Endothelial cell of umbilical vein (primary cell): ENCODE measurements at regions of chr6 and their contacts with region 1.

Region 1: GRCh38 chr6:138517635-138518034 is 18.3 kb upstream of the NHSL1 start:
- DNase-seq: peak; percentile 35
- H3K4me3 ChIP-seq: no peak overlapping the region
- H3K27ac ChIP-seq: no peak overlapping the region
- H3K4me1 ChIP-seq: peaks cover 12% of the 10 kb centered on the region
- H3K27me3 ChIP-seq: no peaks in the 10 kb centered on the region
- CTCF ChIP-seq: peak; percentile 67 to 77
- POLR2A ChIP-seq: no peak

Region 2: DNA sequence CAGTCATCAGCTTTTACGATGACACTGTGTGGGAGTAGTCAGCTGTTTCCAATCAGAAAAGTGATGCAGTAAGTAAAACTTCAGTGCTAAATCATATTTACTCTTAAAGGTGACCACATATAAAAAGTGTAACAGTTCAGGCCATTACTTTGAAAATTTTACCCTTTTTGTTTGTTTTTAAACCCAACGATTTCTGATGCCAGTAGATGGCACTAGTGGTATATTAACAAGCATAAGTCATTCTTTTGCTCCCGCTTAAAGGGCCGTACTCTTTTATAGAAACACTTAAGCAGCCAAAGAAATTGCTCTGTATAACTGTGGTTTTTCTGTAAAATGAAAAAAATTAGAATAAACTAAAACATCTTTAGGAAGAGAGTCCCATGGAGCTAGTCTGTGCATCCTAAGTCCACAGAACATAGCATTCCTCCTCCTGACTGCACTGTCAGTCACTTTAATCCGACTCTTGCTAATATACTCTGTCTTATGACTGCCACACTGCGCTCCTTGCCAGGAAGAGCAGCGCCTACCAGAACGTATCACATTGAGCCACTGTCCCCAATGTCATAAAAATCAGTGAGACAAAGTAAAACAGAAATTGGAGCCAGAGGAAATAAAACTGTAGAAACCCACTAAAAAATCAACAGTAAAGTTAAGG is 88.6 kb before region 1 on chr6:
- CTCF ChIA-PET with region 1: interaction called, 11 read pairs
- POLR2A ChIA-PET with region 1: no interaction called
- dilution Hi-C with region 1: no loop called
- intact Hi-C with region 1: loop called (anchors 1 kb)
- DNase-seq: peak; percentile 62
- H3K4me3 ChIP-seq: no peak overlapping the region
- H3K27ac ChIP-seq: no peak overlapping the region
- H3K4me1 ChIP-seq: no peaks in the 10 kb centered on the region
- H3K27me3 ChIP-seq: no peaks in the 10 kb centered on the region
- CTCF ChIP-seq: peak; percentile 36 to 41
- POLR2A ChIP-seq: no peak

Region 3: GRCh38 chr6:138494312-138494711 is 23.3 kb before region 1 on chr6:
- CTCF ChIA-PET with region 1: no interaction called
- POLR2A ChIA-PET with region 1: no interaction called
- dilution Hi-C with region 1: no loop called
- intact Hi-C with region 1: no loop called
- DNase-seq: no peak
- H3K4me3 ChIP-seq: no peak overlapping the region
- H3K27ac ChIP-seq: no peak overlapping the region
- H3K4me1 ChIP-seq: no peaks in the 10 kb centered on the region
- H3K27me3 ChIP-seq: no peaks in the 10 kb centered on the region
- CTCF ChIP-seq: no peak
- POLR2A ChIP-seq: no peak

Region 4: DNA sequence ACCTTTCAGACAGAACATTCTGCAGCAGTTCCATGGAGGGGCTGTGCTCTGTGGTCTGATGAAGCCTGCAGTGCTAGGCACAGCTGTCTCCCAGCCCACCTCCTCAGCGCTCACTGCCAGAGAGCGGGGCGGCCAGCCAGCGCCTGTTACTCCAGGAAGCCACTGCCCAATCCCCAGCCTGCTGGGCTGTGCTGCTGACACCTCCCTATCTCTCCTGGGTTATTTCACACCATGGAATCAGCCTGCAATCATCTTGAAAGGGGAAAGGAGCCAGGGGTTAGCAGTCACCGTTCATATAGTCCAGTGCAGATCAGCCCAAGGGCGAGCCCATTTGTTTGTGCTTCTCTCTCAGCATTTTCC is 28.0 kb after region 1 on chr6:
- CTCF ChIA-PET with region 1: interaction called, 8 read pairs
- POLR2A ChIA-PET with region 1: no interaction called
- dilution Hi-C with region 1: no loop called
- intact Hi-C with region 1: loop called (anchors 2 kb)
- DNase-seq: peak; percentile 87
- H3K4me3 ChIP-seq: peak overlapping the region in 2 of 3 experiments; percentile 37 to 76
- H3K27ac ChIP-seq: peak overlapping the region; percentile 94
- H3K4me1 ChIP-seq: peaks cover 61% of the 10 kb centered on the region
- H3K27me3 ChIP-seq: no peaks in the 10 kb centered on the region
- CTCF ChIP-seq: no peak
- POLR2A ChIP-seq: peak; percentile 80

Region 5: GRCh38 chr6:138765896-138766655 is 248.4 kb after region 1 on chr6:
- CTCF ChIA-PET with region 1: interaction called, 4 read pairs
- POLR2A ChIA-PET with region 1: no interaction called
- dilution Hi-C with region 1: no loop called
- intact Hi-C with region 1: loop called (anchors 2 kb)
- DNase-seq: peak; percentile 64
- H3K4me3 ChIP-seq: no peak overlapping the region
- H3K27ac ChIP-seq: no peak overlapping the region
- H3K4me1 ChIP-seq: peaks cover 32% of the 10 kb centered on the region
- H3K27me3 ChIP-seq: no peaks in the 10 kb centered on the region
- CTCF ChIP-seq: peak; percentile 22 to 40
- POLR2A ChIP-seq: no peak